ENCODE measurements at regions of chr7 and their contacts with region 1.

Region 1: DNA sequence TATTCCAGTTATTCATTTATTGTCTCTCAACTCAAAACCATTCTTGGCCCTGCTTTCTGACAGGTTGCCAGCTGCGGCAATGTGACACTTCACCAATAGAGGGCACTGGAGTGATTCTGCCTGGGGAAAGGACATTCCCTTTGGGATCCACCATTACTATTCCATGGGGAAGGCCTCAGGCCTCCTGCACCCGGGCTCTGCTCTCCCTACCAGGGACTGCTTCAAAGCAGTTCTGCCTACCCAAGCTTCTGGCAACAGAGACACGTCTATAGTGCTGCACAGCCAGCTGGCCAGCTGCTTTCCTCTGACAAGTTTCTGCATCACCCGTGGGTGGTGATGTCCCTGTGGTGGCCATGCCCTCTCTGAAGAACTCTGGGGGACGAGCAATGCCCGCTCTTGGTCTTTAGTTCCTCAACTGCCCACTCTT is 163.8 kb downstream of the ELMO1 start:
- DNase-seq: peak; percentile 80
- H3K4me3 ChIP-seq: no peak overlapping the region
- H3K27ac ChIP-seq: no peak overlapping the region
- H3K4me1 ChIP-seq: peaks cover 8% of the 10 kb centered on the region
- H3K27me3 ChIP-seq: no peaks in the 10 kb centered on the region
- CTCF ChIP-seq: peak; percentile 84 to 90
- POLR2A ChIP-seq: no peak

Region 2: GRCh38 chr7:36605261-36606051 is 679.4 kb before region 1 on chr7:
- CTCF ChIA-PET with region 1: no interaction called
- POLR2A ChIA-PET with region 1: no interaction called
- dilution Hi-C with region 1: no loop called
- intact Hi-C with region 1: no loop called
- DNase-seq: no peak
- H3K4me3 ChIP-seq: no peak overlapping the region
- H3K27ac ChIP-seq: no peak overlapping the region
- H3K4me1 ChIP-seq: no peaks in the 10 kb centered on the region
- H3K27me3 ChIP-seq: no peaks in the 10 kb centered on the region
- CTCF ChIP-seq: no peak
- POLR2A ChIP-seq: no peak

Region 3: GRCh38 chr7:37269711-37270508 is 14.9 kb before region 1 on chr7:
- CTCF ChIA-PET with region 1: interaction called, 24 read pairs
- POLR2A ChIA-PET with region 1: no interaction called
- dilution Hi-C with region 1: no loop called
- intact Hi-C with region 1: no loop called
- DNase-seq: no peak
- H3K4me3 ChIP-seq: no peak overlapping the region
- H3K27ac ChIP-seq: no peak overlapping the region
- H3K4me1 ChIP-seq: no peaks in the 10 kb centered on the region
- H3K27me3 ChIP-seq: no peaks in the 10 kb centered on the region
- CTCF ChIP-seq: no peak
- POLR2A ChIP-seq: no peak

Region 4: GRCh38 chr7:37495574-37496184 is 210.9 kb after region 1 on chr7:
- CTCF ChIA-PET with region 1: interaction called, 94 read pairs
- POLR2A ChIA-PET with region 1: no interaction called
- dilution Hi-C with region 1: no loop called
- intact Hi-C with region 1: loop called (anchors 1 kb)
- DNase-seq: peak; percentile 52
- H3K4me3 ChIP-seq: no peak overlapping the region
- H3K27ac ChIP-seq: no peak overlapping the region
- H3K4me1 ChIP-seq: no peaks in the 10 kb centered on the region
- H3K27me3 ChIP-seq: no peaks in the 10 kb centered on the region
- CTCF ChIP-seq: peak; percentile 42 to 57
- POLR2A ChIP-seq: no peak

Region 5: DNA sequence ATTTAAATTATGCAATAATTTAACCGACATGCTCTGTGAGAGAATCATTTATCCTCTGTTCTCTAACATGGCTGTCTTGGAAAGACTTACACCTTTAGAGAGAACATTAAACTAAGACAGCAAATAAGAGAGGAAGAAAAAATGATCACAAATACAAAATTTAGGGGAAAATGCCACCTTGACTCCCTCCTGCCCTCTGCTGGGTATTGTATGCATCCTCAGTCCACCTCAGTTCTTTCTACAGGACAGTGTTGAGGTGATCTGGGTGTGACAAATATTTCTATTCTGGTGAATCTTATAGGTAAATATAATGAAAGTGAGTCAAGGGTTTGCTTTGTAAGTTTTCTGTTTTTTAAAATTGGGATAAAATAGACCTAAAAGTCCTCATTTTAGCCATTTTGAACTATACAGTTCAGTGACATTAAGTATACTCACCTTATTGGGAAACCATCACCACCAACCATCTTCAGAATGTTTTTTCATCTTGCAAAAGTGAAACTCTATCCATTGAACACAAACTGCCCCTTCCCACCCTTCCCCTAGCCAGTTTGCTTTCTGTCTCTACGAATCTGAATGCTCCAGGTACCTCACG is 225.3 kb after region 1 on chr7:
- CTCF ChIA-PET with region 1: interaction called, 46 read pairs
- POLR2A ChIA-PET with region 1: no interaction called
- dilution Hi-C with region 1: no loop called
- intact Hi-C with region 1: loop called (anchors 1 kb)
- DNase-seq: peak; percentile 46
- H3K4me3 ChIP-seq: no peak overlapping the region
- H3K27ac ChIP-seq: no peak overlapping the region
- H3K4me1 ChIP-seq: peaks cover 3% of the 10 kb centered on the region
- H3K27me3 ChIP-seq: peaks cover 11 to 14% of the 10 kb centered on the region in 2 experiments
- CTCF ChIP-seq: peak; percentile 72 to 76
- POLR2A ChIP-seq: no peak

Region 6: DNA sequence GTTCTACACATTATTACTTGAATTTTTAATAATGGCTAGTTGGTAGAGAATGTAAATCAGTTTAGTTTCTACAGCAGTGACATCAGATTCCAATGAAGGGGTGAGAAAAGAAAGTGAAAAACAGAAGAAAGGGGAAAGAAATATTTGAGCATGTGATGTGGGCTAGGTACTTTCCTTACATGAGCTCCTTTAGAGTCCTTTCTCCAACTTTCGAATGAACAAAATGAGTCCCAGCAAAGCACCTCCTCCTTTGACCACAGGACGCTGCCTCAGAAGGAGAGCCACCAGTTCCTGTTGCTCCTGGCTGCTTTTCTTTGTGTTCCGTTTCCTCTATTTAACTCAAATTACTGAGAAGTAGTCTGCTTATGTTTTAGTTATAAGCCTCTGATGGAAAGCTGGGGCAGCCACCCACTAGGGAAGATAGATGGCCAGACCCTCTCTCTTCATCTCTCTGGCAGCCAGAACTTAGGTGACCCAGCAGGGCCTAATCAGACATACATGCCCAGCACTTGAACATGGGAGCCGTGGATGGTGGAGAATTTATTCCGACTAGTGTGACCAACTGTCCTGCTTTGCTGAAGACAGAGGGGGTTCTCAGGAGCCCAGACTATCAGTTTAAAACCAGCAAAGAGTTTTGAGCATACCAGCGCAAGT is 481.2 kb after region 1 on chr7:
- CTCF ChIA-PET with region 1: no interaction called
- POLR2A ChIA-PET with region 1: no interaction called
- dilution Hi-C with region 1: no loop called
- intact Hi-C with region 1: no loop called
- DNase-seq: no peak
- H3K4me3 ChIP-seq: no peak overlapping the region
- H3K27ac ChIP-seq: no peak overlapping the region
- H3K4me1 ChIP-seq: no peaks in the 10 kb centered on the region
- H3K27me3 ChIP-seq: no peaks in the 10 kb centered on the region
- CTCF ChIP-seq: no peak
- POLR2A ChIP-seq: no peak

Region 7: GRCh38 chr7:37833107-37833817 is 548.4 kb after region 1 on chr7:
- CTCF ChIA-PET with region 1: interaction called, 3 read pairs
- POLR2A ChIA-PET with region 1: no interaction called
- dilution Hi-C with region 1: no loop called
- intact Hi-C with region 1: loop called (anchors 5 kb)
- DNase-seq: peak; percentile 40
- H3K4me3 ChIP-seq: peak overlapping the region in 1 of 3 experiments; percentile 8
- H3K27ac ChIP-seq: no peak overlapping the region
- H3K4me1 ChIP-seq: no peaks in the 10 kb centered on the region
- H3K27me3 ChIP-seq: peaks cover 0 to 2% of the 10 kb centered on the region in 2 experiments
- CTCF ChIP-seq: peak; percentile 48 to 52
- POLR2A ChIP-seq: no peak

Measured in endothelial cell of umbilical vein (primary cell).